ENCODE measurements at regions of chr7 and their contacts with region 1.

Region 1: DNA sequence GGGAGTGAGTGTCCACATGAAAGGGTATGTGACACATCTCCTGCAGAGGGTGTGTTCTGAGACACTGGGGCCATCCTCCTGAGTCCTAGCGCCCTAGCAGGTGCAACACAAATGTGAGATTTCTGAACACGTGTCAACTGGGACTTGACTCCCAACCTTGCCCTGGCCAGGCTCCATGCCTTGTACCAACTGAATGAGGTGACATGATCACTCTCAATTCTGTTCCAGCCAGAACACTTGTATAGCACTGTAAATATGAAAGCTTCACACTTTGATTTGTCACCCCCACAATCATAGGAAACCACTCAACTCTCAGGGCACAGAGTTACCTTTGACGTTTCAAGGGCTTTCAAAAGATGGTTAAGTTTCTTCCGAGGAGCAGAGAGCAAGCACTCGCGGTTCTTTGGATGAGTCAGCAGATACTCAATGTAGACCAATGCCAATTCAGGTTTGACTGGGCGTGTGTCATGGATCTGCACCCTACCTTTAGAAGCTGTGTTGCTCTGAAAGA is 48.6 kb downstream of the NCAPG2 start:
- DNase-seq: peak; percentile 88
- H3K4me3 Mint-ChIP-seq: peak overlapping the region; percentile 31
- H3K27ac Mint-ChIP-seq: peak overlapping the region; percentile 85
- H3K4me1 Mint-ChIP-seq: peaks cover 29% of the 10 kb centered on the region
- H3K27me3 Mint-ChIP-seq: no peaks in the 10 kb centered on the region

Region 2: GRCh38 chr7:158601082-158601481 is 54.9 kb before region 1 on chr7:
- CTCF ChIA-PET with region 1: no interaction called
- POLR2A ChIA-PET with region 1: no interaction called
- intact Hi-C with region 1: loop called (anchors 1 kb)
- DNase-seq: no peak
- H3K4me3 Mint-ChIP-seq: no peak overlapping the region
- H3K27ac Mint-ChIP-seq: no peak overlapping the region
- H3K4me1 Mint-ChIP-seq: peaks cover 16% of the 10 kb centered on the region
- H3K27me3 Mint-ChIP-seq: no peaks in the 10 kb centered on the region

Region 3: GRCh38 chr7:158824028-158824427 is 168.0 kb after region 1 on chr7:
- CTCF ChIA-PET with region 1: no interaction called
- POLR2A ChIA-PET with region 1: interaction called, 4 read pairs
- intact Hi-C with region 1: loop called (anchors 1 kb)
- DNase-seq: peak; percentile 83
- H3K4me3 Mint-ChIP-seq: peak overlapping the region; percentile 3
- H3K27ac Mint-ChIP-seq: peak overlapping the region; percentile 75
- H3K4me1 Mint-ChIP-seq: peaks cover 63% of the 10 kb centered on the region
- H3K27me3 Mint-ChIP-seq: no peaks in the 10 kb centered on the region

Region 4: GRCh38 chr7:158863611-158864506 is 207.9 kb after region 1 on chr7:
- CTCF ChIA-PET with region 1: no interaction called
- POLR2A ChIA-PET with region 1: interaction called, 13 read pairs
- intact Hi-C with region 1: loop called (anchors 5 kb)
- DNase-seq: peak; percentile 69
- H3K4me3 Mint-ChIP-seq: peak overlapping the region; percentile 77
- H3K27ac Mint-ChIP-seq: peak overlapping the region; percentile 78
- H3K4me1 Mint-ChIP-seq: peaks cover 32% of the 10 kb centered on the region
- H3K27me3 Mint-ChIP-seq: no peaks in the 10 kb centered on the region

Region 5: DNA sequence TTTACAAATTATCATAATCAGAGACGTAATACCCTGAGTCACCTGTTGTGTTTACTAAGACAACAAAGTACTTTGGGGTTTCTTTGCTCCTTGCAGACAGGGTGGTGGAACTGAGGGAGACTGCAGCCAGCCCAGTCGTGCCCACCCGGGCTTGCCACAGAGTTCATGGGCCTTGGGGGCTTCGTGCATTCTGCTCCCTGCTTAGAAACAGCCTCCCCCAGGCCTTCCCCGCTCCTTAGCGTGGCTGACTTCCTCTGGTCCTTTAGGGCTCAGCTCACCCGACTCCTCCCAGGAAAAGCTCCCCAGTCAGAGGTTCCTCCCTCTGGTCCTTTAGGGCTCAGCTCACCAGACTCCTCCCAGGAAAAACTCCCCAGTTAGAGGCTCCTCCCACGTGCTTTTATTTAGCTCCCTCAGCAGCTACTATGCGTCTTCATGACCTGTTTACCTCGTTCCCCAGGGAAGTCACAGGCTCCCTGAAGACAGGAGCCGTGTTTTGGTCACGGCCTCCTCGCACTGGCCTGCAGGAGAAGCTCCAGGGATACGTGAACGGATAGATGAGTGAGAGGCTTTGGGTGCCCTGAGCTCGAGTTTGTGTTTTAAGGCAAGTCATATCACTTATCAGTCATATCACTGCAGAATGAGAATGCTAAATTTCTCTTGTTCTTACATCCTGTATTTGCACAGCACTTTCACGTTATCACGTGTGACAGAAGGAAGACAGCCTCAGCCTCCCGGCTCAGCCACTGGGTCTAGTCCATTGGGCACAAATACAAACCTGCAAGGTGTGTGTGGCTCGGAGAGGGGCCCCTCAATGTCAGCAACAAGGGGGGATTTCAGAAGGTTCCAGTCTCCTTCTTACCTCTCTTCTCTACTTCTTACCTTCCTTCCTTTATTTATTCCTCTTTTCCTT is 541.3 kb after region 1 on chr7:
- CTCF ChIA-PET with region 1: no interaction called
- POLR2A ChIA-PET with region 1: no interaction called
- intact Hi-C with region 1: loop called (anchors 2 kb)
- DNase-seq: peak; percentile 74
- H3K4me3 Mint-ChIP-seq: peak overlapping the region; percentile 70
- H3K27ac Mint-ChIP-seq: peak overlapping the region; percentile 98
- H3K4me1 Mint-ChIP-seq: peaks cover 38% of the 10 kb centered on the region
- H3K27me3 Mint-ChIP-seq: no peaks in the 10 kb centered on the region